PC-3 (cell line): ENCODE measurements at regions of chr12 and their contacts with region 1.

Region 1: DNA sequence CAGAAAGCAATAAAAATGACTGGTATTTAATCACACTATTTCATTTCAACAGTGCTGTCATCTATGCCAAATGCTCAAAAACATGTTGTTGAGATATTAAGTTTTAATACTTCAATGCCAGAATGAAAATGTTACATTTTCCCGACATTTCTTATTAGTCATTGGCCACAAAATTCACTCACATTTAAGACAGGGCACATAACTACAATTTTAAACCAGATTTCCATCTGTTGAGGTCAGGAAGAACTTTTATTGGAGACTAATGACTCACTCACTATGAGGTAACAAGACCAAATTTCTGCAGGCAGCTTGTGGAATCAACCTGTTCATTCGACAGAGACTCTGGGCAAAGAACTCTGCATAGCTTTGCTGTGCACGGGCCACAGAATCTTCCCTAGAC is 36.8 kb downstream of the PPTC7 start:
- DNase-seq: peak; percentile 97
- ATAC-seq: peak; percentile 76
- H3K4me3 ChIP-seq: peak overlapping the region; percentile 32; the same call in 1 of the 2 replicates
- H3K27ac ChIP-seq: peak overlapping the region; percentile 92
- H3K4me1 ChIP-seq: peaks cover 27% of the 10 kb centered on the region
- H3K27me3 ChIP-seq: no peaks in the 10 kb centered on the region
- CTCF ChIP-seq: no peak

Region 2: GRCh38 chr12:110366321-110367142 is 179.8 kb before region 1 on chr12:
- CTCF ChIA-PET with region 1: interaction called, 15 read pairs
- POLR2A ChIA-PET with region 1: no interaction called
- intact Hi-C with region 1: no loop called
- DNase-seq: no peak
- ATAC-seq: no peak
- H3K4me3 ChIP-seq: no peak overlapping the region
- H3K27ac ChIP-seq: no peak overlapping the region
- H3K4me1 ChIP-seq: no peaks in the 10 kb centered on the region
- H3K27me3 ChIP-seq: no peaks in the 10 kb centered on the region
- CTCF ChIP-seq: no peak

Region 3: DNA sequence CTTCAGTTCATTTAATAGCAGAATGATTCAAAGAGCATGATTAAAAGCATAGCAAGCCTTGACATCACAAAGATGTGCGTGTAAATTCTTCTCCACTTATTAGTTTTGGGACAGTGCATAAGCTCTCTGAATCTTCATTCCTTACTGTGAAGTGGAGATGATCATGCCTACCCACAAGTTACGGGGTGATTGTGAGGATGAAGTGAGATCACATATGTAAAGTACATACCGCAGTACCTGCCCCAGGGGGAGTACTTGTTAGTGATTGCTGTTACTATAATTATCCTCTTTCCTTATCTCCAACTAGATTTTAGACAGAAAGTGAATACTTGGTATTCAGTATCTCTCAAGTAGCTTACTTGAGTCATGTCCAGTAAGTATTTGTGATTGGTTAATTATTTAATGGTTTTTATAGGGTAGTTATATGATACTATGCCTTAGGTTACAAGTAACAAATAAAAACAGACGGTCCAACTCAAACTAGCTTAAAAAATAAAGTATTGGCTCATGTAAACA is 38.2 kb before region 1 on chr12:
- CTCF ChIA-PET with region 1: interaction called, 3 read pairs
- POLR2A ChIA-PET with region 1: no interaction called
- intact Hi-C with region 1: loop called (anchors 1 kb)
- DNase-seq: no peak
- ATAC-seq: no peak
- H3K4me3 ChIP-seq: no peak overlapping the region
- H3K27ac ChIP-seq: no peak overlapping the region
- H3K4me1 ChIP-seq: peaks cover 3% of the 10 kb centered on the region; the same call in 1 of the 2 replicates
- H3K27me3 ChIP-seq: no peaks in the 10 kb centered on the region
- CTCF ChIP-seq: no peak

Region 4: GRCh38 chr12:110698171-110698902 is 152.0 kb after region 1 on chr12:
- CTCF ChIA-PET with region 1: no interaction called
- POLR2A ChIA-PET with region 1: no interaction called
- intact Hi-C with region 1: loop called (anchors 2 kb)
- DNase-seq: peak; percentile 97
- ATAC-seq: peak; percentile 94
- H3K4me3 ChIP-seq: peak overlapping the region; percentile 12; the same call in 1 of the 2 replicates
- H3K27ac ChIP-seq: peak overlapping the region; percentile 65
- H3K4me1 ChIP-seq: 0 out of 2 replicates have a peak, but pooled peaks cover 6% of the 10 kb centered on the region
- H3K27me3 ChIP-seq: no peaks in the 10 kb centered on the region
- CTCF ChIP-seq: peak; percentile 80